HEK293T (cell line): ENCODE measurements at regions of chr1 and their contacts with region 1.

Region 1: GRCh38 chr1:107142140-107142542 is 1.3 kb downstream of the NTNG1 start:
- DNase-seq: peak; percentile 40

Region 2: GRCh38 chr1:105436589-105437259 is 1705.4 kb before region 1 on chr1:
- CTCF ChIA-PET with region 1: no interaction called
- POLR2A ChIA-PET with region 1: no interaction called
- DNase-seq: no peak

Region 3: GRCh38 chr1:107056426-107057196 is 85.5 kb before region 1 on chr1 and contains the start of gene PRMT6:
- CTCF ChIA-PET with region 1: interaction called, 4 read pairs
- POLR2A ChIA-PET with region 1: interaction called, 13 read pairs
- DNase-seq: peak; percentile 87